ENCODE measurements at regions of chr15 and their contacts with region 1.

Region 1: DNA sequence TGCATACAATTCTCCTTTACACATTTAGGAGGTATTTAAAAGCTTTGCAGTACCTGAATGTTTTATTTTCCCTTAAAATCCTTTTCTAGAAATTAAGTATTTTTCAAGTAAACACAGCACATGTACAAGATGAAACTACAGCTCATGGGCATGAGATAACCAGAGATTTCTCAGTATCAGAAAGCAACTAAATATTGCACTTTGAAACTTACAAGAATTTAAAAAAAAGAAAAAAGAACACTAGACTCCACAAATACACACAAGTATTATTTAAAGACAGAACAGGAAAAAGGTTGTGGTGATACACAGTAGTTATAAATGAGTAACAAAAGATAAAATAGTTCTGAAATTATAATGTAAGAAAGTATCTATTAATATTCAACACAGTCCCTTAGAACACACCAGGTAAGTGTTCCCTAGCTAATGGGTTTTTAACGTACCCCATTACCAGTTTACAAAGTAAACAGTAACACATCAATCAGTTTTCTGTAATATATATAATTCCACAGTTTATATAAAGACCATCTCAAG is 35.3 kb downstream of the SLTM start:
- DNase-seq: no peak
- ATAC-seq: no peak
- H3K4me3 ChIP-seq: no peak overlapping the region
- H3K27ac ChIP-seq: no peak overlapping the region
- H3K4me1 ChIP-seq: no peaks in the 10 kb centered on the region
- H3K27me3 ChIP-seq: no peaks in the 10 kb centered on the region
- CTCF ChIP-seq: no peak
- EP300 ChIP-seq: no peak
- POLR2A ChIP-seq: no peak
- RAD21 ChIP-seq: no peak

Region 2: DNA sequence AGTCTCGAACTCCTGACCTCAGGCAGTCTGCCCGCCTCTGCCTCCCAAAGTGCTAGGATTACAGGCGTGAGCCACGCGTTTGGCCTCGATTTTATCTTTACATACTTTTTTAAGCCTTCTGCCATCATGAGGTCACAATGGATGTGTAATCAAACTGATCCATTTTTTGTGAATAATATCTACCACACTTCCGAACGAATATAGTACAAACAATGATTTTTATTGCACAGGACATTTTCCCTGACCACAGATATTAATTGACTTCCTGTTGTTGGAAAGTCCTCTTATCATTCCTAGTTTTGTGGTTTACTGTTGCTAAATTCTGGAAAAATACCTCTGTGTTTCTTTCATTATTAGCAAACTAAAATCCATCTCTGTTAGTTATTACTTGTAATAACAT is 58.2 kb before region 1 on chr15:
- CTCF ChIA-PET with region 1: no interaction called
- POLR2A ChIA-PET with region 1: no interaction called
- in situ Hi-C with region 1: no loop called
- intact Hi-C with region 1: loop called (anchors 10 kb)
- DNase-seq: no peak
- ATAC-seq: no peak
- H3K4me3 ChIP-seq: no peak overlapping the region
- H3K27ac ChIP-seq: no peak overlapping the region
- H3K4me1 ChIP-seq: no peaks in the 10 kb centered on the region
- H3K27me3 ChIP-seq: no peaks in the 10 kb centered on the region
- CTCF ChIP-seq: no peak
- EP300 ChIP-seq: no peak
- POLR2A ChIP-seq: no peak
- RAD21 ChIP-seq: no peak

Measured in HepG2 (cell line).